Mammary epithelial cell (primary cell): ENCODE measurements at regions of chr12 and their contacts with region 1.

Region 1: GRCh38 chr12:47657565-47657964 is 48.3 kb downstream of the RPAP3 start:
- DNase-seq: no peak
- H3K4me3 ChIP-seq: no peak overlapping the region
- H3K27ac ChIP-seq: no peak overlapping the region
- H3K4me1 ChIP-seq: no peaks in the 10 kb centered on the region
- H3K27me3 ChIP-seq: no peaks in the 10 kb centered on the region
- CTCF ChIP-seq: no peak

Region 2: GRCh38 chr12:47591361-47591791 is 66.2 kb before region 1 on chr12:
- CTCF ChIA-PET with region 1: no interaction called
- dilution Hi-C with region 1: no loop called
- in situ Hi-C with region 1: no loop called
- intact Hi-C with region 1: no loop called
- DNase-seq: no peak
- H3K4me3 ChIP-seq: no peak overlapping the region
- H3K27ac ChIP-seq: no peak overlapping the region
- H3K4me1 ChIP-seq: no peaks in the 10 kb centered on the region
- H3K27me3 ChIP-seq: no peaks in the 10 kb centered on the region
- CTCF ChIP-seq: no peak

Region 3: GRCh38 chr12:47828608-47829536 is 171.3 kb after region 1 on chr12:
- CTCF ChIA-PET with region 1: interaction called, 18 read pairs
- dilution Hi-C with region 1: no loop called
- in situ Hi-C with region 1: no loop called
- intact Hi-C with region 1: no loop called
- DNase-seq: peak; percentile 79
- H3K4me3 ChIP-seq: no peak overlapping the region
- H3K27ac ChIP-seq: peak overlapping the region; percentile 33
- H3K4me1 ChIP-seq: peaks cover 42% of the 10 kb centered on the region
- H3K27me3 ChIP-seq: no peaks in the 10 kb centered on the region
- CTCF ChIP-seq: no peak